Aorta (tissue), 5 donors: ENCODE measurements at regions of chr7 and their contacts with region 1.

Region 1: DNA sequence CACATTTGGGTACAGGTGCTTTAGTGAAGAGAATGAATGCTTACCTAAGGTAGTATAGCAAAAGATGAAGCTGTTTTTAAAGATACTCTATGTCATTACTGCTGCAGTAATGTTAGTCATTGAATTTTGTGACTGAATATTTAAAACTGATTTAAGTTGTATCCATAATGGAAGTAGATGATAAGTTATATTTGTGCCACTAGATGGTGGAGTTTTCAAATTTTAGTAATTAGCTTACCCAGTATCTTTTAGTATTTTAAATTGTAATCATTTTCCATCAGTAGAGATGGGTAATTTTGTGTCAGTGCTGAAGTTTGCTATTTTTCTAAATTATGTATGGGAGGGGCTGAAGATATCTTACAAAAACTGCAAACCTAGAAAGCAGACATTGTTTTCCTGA is 25.2 kb downstream of the HBP1 start:
- DNase-seq: no peak
- ATAC-seq: no peak
- H3K4me3 ChIP-seq: no peak overlapping the region
- H3K27ac ChIP-seq: no peak overlapping the region
- H3K4me1 ChIP-seq: no peaks in the 10 kb centered on the region
- H3K27me3 ChIP-seq: no peaks in the 10 kb centered on the region

Region 2: DNA sequence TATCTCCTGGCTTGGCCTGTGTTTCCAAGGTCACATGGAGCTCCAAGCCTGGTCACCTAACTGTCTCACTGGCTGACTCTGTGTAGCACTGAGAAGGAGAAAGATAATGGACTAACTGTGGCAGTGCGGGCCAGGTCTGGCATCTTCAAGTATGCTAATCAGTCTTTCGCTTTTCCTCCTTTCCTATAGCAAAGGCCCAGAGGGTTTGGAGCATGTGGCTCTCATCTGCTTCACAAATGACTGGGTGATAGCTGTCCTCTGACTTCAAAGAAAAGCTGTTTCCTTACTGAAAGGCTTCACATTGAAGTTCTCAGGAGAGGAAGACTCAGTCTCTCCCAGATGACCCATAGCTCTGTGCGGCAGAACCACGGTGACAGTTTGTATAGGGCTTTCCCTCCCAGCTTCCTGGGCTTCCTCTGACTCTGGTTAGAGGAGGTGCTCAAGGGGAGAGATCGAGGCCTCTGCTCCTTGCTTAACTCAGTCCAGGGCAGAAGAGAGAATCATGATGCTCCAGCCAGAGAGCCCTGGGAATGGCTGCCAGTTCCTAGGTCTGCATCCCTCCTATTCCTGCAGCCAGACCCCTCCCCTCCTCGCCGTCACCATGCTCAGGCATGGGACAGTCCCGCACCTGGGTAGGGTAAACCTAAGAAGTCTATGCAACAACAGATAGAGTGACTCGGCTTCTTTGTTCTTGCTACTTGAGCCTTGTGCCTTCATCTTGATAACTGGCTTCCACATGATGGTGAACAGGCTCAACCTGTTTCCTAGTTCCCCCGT is 605.4 kb before region 1 on chr7:
- intact Hi-C with region 1: no loop called
- DNase-seq: no peak
- ATAC-seq: no peak
- H3K4me3 ChIP-seq: no peak overlapping the region
- H3K27ac ChIP-seq: no peak overlapping the region
- H3K4me1 ChIP-seq: no peaks in the 10 kb centered on the region
- H3K27me3 ChIP-seq: no peaks in the 10 kb centered on the region

Region 3: GRCh38 chr7:107563775-107564552 is 369.9 kb after region 1 on chr7 and contains the starts of genes COG5 and DUS4L:
- intact Hi-C with region 1: loop called in 1 of 2 experiments (anchors 10 kb)
- DNase-seq: peak; percentile 88 to 95
- ATAC-seq: peak; percentile 96
- H3K4me3 ChIP-seq: peak within 1 kb of the TSS; percentile 29 to 81
- H3K27ac ChIP-seq: peak within 1 kb of the TSS; percentile 64 to 69
- H3K4me1 ChIP-seq: peaks cover 0 to 3% of the 10 kb centered on the region in 2 donors
- H3K27me3 ChIP-seq: no peaks in the 10 kb centered on the region
- total RNA-seq, gene COG5: 55.9 to 58.2 TPM
- total RNA-seq, gene DUS4L: 6.4 to 6.8 TPM